Heart right ventricle (tissue), 16 donors: ENCODE measurements at regions of chr10 and their contacts with region 1.

Region 1: DNA sequence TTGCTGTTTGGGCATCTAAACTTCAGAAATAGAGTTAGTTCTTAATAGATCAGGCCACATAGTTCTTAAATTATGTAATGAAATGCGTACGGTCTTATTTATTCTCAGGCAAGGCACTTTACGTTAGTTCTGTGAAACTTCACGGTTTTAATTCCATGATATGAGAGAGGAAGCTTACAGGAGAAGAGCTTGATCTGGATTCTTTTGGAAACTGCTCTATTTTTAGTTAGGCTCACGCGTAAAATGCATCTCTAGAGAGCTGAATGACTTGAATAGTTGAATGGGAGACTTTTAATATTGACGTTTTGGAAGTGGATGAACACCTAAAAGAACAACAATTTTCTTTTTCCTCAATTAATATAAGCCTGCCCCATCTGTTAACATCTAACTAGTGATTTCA is 71.1 kb downstream of the PRKG1 start:
- DNase-seq: no peak
- ATAC-seq: peak in 7 of 8 donors; percentile 25 to 75 (median 60)
- H3K4me3 ChIP-seq: no peak overlapping the region
- H3K27ac ChIP-seq: peak overlapping the region in 8 of 10 donors; percentile 27 to 63 (median 48)
- H3K4me1 ChIP-seq: peaks cover 0 to 60% (median 18%) of the 10 kb centered on the region in 9 donors
- H3K27me3 ChIP-seq: no peaks in the 10 kb centered on the region
- CTCF ChIP-seq: no peak

Region 2: DNA sequence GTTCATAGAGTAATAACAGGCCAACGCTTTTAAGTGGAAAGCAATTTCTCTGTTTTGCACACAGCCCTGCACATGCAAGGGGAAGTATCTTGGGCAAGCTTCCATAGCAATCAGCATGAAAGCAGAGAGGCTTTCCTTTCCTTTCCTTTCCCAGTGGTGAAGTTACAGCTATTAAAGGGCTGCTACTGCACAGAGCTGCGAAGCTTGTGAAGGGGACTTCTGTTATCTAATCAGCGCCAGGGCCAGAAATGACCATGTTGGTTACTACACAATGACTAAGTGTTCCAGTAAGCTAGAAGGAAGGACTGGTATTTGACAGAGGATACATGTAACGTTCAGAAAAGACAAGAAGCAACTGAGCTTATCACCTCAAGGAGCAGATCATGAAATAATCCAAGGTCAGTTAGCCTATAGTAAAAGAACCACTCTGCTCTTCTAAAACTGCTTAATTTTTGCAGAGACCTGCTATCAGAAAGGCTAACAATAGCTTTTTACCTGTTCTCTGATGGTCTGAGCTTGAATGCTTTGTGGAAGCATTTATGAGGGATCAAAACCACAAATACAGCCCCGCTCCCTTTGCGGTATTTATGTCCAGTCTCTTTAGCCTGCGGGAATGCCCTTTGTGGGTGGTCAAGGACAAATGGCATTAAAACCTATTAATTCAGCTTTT is 567.6 kb before region 1 on chr10:
- intact Hi-C with region 1: no loop called
- DNase-seq: peak in 1 of 2 donors; percentile 54
- ATAC-seq: peak; percentile 80 to 94 (median 88)
- H3K4me3 ChIP-seq: peak overlapping the region in 2 of 10 donors; percentile 1 to 11
- H3K27ac ChIP-seq: peak overlapping the region; percentile 11 to 81 (median 66)
- H3K4me1 ChIP-seq: peaks cover 0 to 56% (median 42%) of the 10 kb centered on the region in 9 donors
- H3K27me3 ChIP-seq: no peaks in the 10 kb centered on the region
- CTCF ChIP-seq: no peak

Region 3: DNA sequence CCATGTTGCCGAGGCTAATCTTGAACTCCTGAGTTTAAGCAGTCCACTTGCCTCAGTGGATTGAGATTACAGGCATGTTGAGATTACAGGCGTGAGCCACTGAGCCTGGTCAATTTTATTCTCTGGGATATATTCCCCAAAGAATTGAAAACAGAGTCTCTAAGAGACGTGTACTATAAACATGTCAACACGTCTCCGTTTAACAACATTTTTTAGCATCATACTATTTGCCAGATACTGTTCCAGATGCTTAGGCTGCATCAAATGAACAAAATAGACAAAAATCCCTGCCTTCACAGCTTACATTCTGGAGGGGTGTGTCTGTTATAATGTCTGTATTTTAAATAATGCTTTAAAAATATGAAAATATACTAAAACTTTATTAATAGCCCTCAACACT is 125.2 kb before region 1 on chr10:
- intact Hi-C with region 1: no loop called
- DNase-seq: no peak
- ATAC-seq: peak in 1 of 8 donors; percentile 50
- H3K4me3 ChIP-seq: no peak overlapping the region
- H3K27ac ChIP-seq: peak overlapping the region in 1 of 10 donors; percentile 14
- H3K4me1 ChIP-seq: peaks cover 0 to 28% (median 11%) of the 10 kb centered on the region in 9 donors
- H3K27me3 ChIP-seq: no peaks in the 10 kb centered on the region
- CTCF ChIP-seq: no peak

Region 4: DNA sequence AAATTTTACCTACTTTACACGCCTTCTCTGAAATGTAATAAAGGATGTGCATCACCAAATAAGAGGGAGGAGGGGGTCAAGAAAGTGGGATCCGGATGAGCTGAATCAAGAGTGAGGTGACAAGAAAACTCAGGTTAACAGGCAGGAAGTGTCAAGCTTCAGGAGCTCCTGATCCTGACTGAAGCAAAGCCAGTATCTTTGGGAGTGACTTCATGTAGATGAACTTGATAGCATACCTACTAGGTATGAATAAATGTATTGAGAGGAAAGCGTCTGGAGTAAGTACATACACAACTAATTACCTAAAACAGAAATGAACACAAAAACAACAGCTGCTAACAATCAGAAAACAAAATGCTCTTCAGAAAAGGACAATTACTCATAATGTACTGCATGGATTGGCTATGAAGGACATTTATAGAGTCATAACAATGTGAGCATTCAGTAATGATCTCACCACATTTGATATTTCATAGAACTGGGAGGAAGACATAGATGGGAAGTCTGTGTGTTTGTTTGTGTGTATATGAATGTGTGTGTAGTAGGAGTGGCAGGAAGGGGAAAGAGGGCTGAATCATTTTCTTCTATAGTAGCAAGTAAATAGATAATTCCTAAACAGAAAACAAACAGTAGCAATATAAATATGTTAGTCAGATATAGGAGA is 41.7 kb before region 1 on chr10:
- intact Hi-C with region 1: loop called in 1 of 10 experiments (anchors 5 kb)
- DNase-seq: no peak
- ATAC-seq: no peak
- H3K4me3 ChIP-seq: no peak overlapping the region
- H3K27ac ChIP-seq: no peak overlapping the region
- H3K4me1 ChIP-seq: peaks cover 0 to 34% (median 8%) of the 10 kb centered on the region in 9 donors
- H3K27me3 ChIP-seq: no peaks in the 10 kb centered on the region
- CTCF ChIP-seq: no peak

Region 5: DNA sequence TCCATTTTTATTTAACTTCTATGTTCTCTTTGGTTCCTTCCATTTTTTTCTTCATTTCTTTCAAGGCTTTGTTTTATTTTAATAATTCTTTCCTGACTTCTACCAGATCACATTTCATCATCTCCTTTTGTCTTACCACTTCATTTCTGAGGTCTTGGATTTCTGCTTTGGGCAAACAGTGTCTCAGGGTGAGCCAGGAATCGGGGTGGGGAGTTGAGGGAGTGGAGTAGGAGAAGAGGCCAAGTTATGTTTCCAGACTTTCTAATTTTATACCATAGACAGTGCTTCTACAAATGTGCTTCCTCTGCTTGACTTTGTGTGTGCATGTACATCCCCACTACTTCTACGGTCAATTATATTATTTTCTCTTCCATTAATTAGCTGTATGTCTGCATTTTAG is 41.0 kb after region 1 on chr10:
- intact Hi-C with region 1: no loop called
- DNase-seq: no peak
- ATAC-seq: no peak
- H3K4me3 ChIP-seq: no peak overlapping the region
- H3K27ac ChIP-seq: no peak overlapping the region
- H3K4me1 ChIP-seq: peaks cover 0 to 32% (median 10%) of the 10 kb centered on the region in 9 donors
- H3K27me3 ChIP-seq: no peaks in the 10 kb centered on the region
- CTCF ChIP-seq: no peak

Region 6: GRCh38 chr10:51196508-51197175 is 51.3 kb after region 1 on chr10:
- intact Hi-C with region 1: no loop called
- DNase-seq: no peak
- ATAC-seq: no peak
- H3K4me3 ChIP-seq: no peak overlapping the region
- H3K27ac ChIP-seq: no peak overlapping the region
- H3K4me1 ChIP-seq: no peaks in the 10 kb centered on the region
- H3K27me3 ChIP-seq: no peaks in the 10 kb centered on the region
- CTCF ChIP-seq: no peak